ENCODE measurements at regions of chr17 and their contacts with region 1.

Region 1: GRCh38 chr17:49707608-49708514 is at the start of gene SLC35B1:
- DNase-seq: peak; percentile 100
- ATAC-seq: peak; percentile 97
- H3K4me3 Mint-ChIP-seq: peak within 1 kb of the TSS; percentile 93
- H3K27ac Mint-ChIP-seq: peak within 1 kb of the TSS; percentile 97
- H3K4me1 Mint-ChIP-seq: peaks cover 39% of the 10 kb centered on the region
- H3K27me3 Mint-ChIP-seq: no peaks in the 10 kb centered on the region
- total RNA-seq, gene SLC35B1: 43.9 to 59.4 TPM

Region 2: GRCh38 chr17:49414622-49415350 is 293.1 kb before region 1 on chr17 and contains the start of gene PHB1:
- CTCF ChIA-PET with region 1: interaction called, 3 read pairs
- POLR2A ChIA-PET with region 1: no interaction called
- intact Hi-C with region 1: loop called (anchors 1 to 5 kb)
- DNase-seq: peak; percentile 98
- ATAC-seq: peak; percentile 100
- H3K4me3 Mint-ChIP-seq: peak within 1 kb of the TSS; percentile 100
- H3K27ac Mint-ChIP-seq: peak within 1 kb of the TSS; percentile 95
- H3K4me1 Mint-ChIP-seq: peaks cover 32% of the 10 kb centered on the region
- H3K27me3 Mint-ChIP-seq: no peaks in the 10 kb centered on the region
- total RNA-seq, gene PHB1: 346 to 350 TPM

Region 3: DNA sequence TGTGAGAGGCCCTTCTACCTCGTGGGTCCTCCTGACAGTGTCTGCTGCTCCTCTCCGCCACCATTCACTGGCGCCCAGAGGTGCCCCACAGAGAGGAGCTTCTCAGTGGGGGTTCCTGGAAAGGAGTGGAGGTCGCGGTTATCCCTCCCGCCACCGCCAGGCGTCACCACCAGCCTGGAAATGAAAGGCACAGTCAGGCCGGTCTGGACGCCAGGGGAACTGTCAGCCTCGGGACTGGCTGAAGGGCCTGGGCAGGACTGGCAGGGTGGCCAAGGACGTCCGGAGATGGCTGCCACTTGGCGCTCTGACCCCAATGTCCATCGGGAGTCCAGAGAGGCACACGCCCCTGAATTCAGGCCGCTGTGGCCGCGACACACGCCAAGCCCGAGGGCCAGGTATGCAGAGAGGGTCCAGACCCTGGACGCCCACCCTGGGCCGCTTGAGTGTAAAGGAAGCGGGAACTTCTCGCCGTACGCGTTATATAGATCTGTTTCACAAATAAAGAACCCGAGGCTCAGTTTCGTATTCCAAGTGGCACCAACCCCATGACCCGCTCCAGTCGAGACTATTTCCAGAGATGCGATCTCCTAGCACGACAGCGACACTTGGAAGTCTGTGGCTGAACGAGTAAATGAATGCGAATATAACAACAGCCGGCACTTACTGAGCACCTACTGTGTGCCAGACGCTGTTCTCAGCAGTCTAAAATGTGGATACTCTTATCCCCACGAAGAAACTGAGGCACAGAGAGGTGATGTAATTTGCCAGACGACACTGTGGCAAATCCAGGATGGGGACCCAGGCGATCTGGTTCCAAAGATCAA is 139.8 kb before region 1 on chr17:
- CTCF ChIA-PET with region 1: interaction called, 458 read pairs
- POLR2A ChIA-PET with region 1: interaction called, 4 read pairs
- intact Hi-C with region 1: loop called in 1 of 2 experiments (anchors 1 kb)
- DNase-seq: peak; percentile 91
- ATAC-seq: peak; percentile 49
- H3K4me3 Mint-ChIP-seq: peak overlapping the region; percentile 56
- H3K27ac Mint-ChIP-seq: no peak overlapping the region
- H3K4me1 Mint-ChIP-seq: peaks cover 14% of the 10 kb centered on the region
- H3K27me3 Mint-ChIP-seq: peaks cover 19% of the 10 kb centered on the region

Region 4: GRCh38 chr17:49694847-49695683 is 12.8 kb before region 1 on chr17:
- CTCF ChIA-PET with region 1: interaction called, 61 read pairs
- POLR2A ChIA-PET with region 1: interaction called, 7 read pairs
- intact Hi-C with region 1: loop called in 1 of 2 experiments (anchors 1 kb)
- DNase-seq: peak; percentile 85
- ATAC-seq: no peak
- H3K4me3 Mint-ChIP-seq: no peak overlapping the region
- H3K27ac Mint-ChIP-seq: peak overlapping the region; percentile 90
- H3K4me1 Mint-ChIP-seq: peaks cover 36% of the 10 kb centered on the region
- H3K27me3 Mint-ChIP-seq: no peaks in the 10 kb centered on the region

Region 5: GRCh38 chr17:49748791-49749190 is 40.9 kb after region 1 on chr17:
- CTCF ChIA-PET with region 1: interaction called, 5 read pairs
- POLR2A ChIA-PET with region 1: interaction called, 9 read pairs
- intact Hi-C with region 1: loop called in 1 of 2 experiments (anchors 2 kb)
- DNase-seq: peak; percentile 76
- ATAC-seq: peak; percentile 89
- H3K4me3 Mint-ChIP-seq: peak overlapping the region; percentile 35
- H3K27ac Mint-ChIP-seq: peak overlapping the region; percentile 88
- H3K4me1 Mint-ChIP-seq: peaks cover 77% of the 10 kb centered on the region
- H3K27me3 Mint-ChIP-seq: no peaks in the 10 kb centered on the region

Region 6: GRCh38 chr17:49851387-49852291 is 143.8 kb after region 1 on chr17:
- CTCF ChIA-PET with region 1: no interaction called
- POLR2A ChIA-PET with region 1: no interaction called
- intact Hi-C with region 1: loop called in 1 of 2 experiments (anchors 2 kb)
- DNase-seq: peak; percentile 83
- ATAC-seq: peak; percentile 74
- H3K4me3 Mint-ChIP-seq: peak overlapping the region; percentile 76
- H3K27ac Mint-ChIP-seq: peak overlapping the region; percentile 84
- H3K4me1 Mint-ChIP-seq: peaks cover 13% of the 10 kb centered on the region
- H3K27me3 Mint-ChIP-seq: peaks cover 1% of the 10 kb centered on the region

Measured in activated CD4-positive, alpha-beta T cell treated with anti-CD3 and anti-CD28 coated beads for 36 hours (primary cell).